ENCODE measurements at regions of chr5 and their contacts with region 1.

Region 1: DNA sequence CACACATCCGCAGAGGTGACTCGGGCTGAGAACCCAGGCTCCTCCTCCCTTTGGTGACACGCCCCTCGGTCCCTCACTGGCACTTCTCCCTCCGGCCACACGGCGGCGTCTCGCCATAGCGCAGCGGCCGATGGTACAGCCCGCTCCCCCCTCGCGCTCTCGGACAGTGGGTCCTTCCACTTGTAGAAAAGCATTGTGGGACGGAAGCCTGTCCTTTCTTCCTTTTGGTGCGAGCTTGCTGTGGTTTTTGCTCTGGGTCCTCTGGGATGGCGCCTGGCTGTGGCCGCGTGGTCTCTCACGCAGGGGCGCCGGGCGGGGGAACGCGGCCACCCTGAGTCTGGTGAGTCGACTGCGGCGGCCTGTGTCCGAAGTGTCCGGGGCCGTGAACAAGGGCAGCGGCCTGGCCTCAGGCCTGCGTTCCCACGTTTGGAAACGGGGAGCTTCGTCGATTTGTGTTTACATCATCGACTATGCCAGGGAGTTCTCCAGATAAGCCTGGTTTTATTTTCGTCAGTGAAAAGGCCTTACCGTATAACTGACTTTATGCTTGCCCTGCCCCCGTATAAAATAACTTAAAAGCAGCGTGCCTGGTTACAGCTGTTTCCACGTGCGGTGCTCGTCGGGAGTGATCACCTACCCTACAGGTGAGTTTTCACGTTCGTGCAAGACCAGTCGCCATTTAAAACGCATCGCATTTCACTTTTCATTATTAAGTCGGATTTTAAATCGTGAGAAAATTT is 258.3 kb downstream of the EPB41L4A start:
- DNase-seq: peak; percentile 95
- ATAC-seq: peak; percentile 90
- H3K4me3 Mint-ChIP-seq: peak overlapping the region; percentile 91
- H3K27ac Mint-ChIP-seq: peak overlapping the region; percentile 92
- H3K4me1 Mint-ChIP-seq: peaks cover 44% of the 10 kb centered on the region
- H3K27me3 Mint-ChIP-seq: no peaks in the 10 kb centered on the region

Region 2: DNA sequence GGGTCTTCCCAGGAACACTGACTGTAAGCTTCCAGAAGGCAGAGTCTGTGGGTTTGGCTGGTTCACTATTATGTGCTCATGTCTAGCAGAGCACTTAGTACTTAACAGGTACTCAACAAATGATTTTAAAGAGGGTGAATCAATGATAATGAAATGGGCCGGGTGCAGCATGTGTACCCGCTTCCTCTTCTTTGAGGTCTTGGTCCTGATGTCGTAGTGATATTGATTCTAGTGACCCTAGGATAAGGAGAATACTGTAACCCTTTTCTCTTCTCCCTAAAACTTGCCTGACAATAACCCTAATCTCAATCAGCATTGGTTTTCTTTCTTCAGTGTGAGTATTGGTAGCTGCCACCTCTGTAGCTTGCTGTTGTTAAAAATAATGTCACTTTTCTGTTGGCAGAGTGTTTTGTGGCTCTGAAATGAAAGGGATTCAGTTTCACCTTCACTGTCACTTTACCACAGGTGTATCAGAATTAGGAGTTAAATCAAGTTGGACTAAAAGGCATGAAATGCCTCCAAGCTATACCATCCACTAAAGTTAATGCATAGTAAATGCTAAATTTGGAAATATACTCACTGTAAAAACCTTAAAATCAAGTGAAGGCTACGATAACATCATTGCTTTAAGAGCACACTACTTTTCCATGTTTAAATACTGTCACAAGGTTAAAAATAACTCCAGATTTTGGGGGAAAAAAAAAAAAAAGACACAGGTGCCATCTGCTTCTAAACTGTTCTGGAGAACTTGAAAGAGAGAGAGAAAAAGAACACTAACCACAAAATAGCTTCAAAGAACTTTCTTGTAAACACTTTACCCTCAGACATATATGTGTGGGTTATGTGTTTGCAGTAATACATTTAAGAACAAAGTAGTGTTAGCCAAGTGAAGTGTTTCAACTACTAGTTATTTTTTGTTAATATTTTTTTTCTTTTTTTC is 930.7 kb before region 1 on chr5:
- CTCF ChIA-PET with region 1: no interaction called
- POLR2A ChIA-PET with region 1: no interaction called
- intact Hi-C with region 1: loop called (anchors 10 kb)
- DNase-seq: peak; percentile 36
- ATAC-seq: peak; percentile 49
- H3K4me3 Mint-ChIP-seq: peak overlapping the region; percentile 69
- H3K27ac Mint-ChIP-seq: peak overlapping the region; percentile 96
- H3K4me1 Mint-ChIP-seq: peaks cover 71% of the 10 kb centered on the region
- H3K27me3 Mint-ChIP-seq: no peaks in the 10 kb centered on the region

Region 3: GRCh38 chr5:111757355-111758283 is 403.2 kb before region 1 on chr5:
- CTCF ChIA-PET with region 1: interaction called, 5 read pairs
- POLR2A ChIA-PET with region 1: no interaction called
- intact Hi-C with region 1: loop called (anchors 2 to 5 kb)
- DNase-seq: peak; percentile 91
- ATAC-seq: peak; percentile 78
- H3K4me3 Mint-ChIP-seq: peak overlapping the region; percentile 80
- H3K27ac Mint-ChIP-seq: peak overlapping the region; percentile 86
- H3K4me1 Mint-ChIP-seq: peaks cover 18% of the 10 kb centered on the region
- H3K27me3 Mint-ChIP-seq: peaks cover 3% of the 10 kb centered on the region

Region 4: GRCh38 chr5:111942661-111943401 is 218.0 kb before region 1 on chr5:
- CTCF ChIA-PET with region 1: no interaction called
- POLR2A ChIA-PET with region 1: no interaction called
- intact Hi-C with region 1: no loop called
- DNase-seq: no peak
- ATAC-seq: peak; percentile 16
- H3K4me3 Mint-ChIP-seq: no peak overlapping the region
- H3K27ac Mint-ChIP-seq: no peak overlapping the region
- H3K4me1 Mint-ChIP-seq: no peaks in the 10 kb centered on the region
- H3K27me3 Mint-ChIP-seq: peaks cover 3% of the 10 kb centered on the region

Region 5: DNA sequence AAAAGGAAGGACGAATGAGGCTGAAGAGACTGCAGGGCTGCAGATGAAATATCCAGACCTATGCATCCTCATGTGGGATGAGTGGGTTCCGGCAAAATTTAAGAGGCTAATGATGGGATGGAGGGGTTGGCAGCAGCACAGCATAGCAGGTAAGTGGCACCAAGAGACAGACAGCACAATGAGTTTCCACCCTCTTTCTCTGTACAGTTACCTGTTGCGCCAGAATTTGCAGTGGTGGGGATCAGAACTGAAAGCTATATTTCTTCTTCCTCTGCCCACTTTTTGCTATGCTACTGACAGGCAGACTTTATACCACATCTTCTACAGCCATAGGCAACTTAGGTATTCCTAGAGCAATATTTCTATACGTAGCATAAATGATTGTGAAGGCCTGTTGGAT is 31.2 kb after region 1 on chr5:
- CTCF ChIA-PET with region 1: no interaction called
- POLR2A ChIA-PET with region 1: no interaction called
- intact Hi-C with region 1: no loop called
- DNase-seq: no peak
- ATAC-seq: no peak
- H3K4me3 Mint-ChIP-seq: no peak overlapping the region
- H3K27ac Mint-ChIP-seq: no peak overlapping the region
- H3K4me1 Mint-ChIP-seq: peaks cover 7% of the 10 kb centered on the region
- H3K27me3 Mint-ChIP-seq: peaks cover 28% of the 10 kb centered on the region

Region 6: DNA sequence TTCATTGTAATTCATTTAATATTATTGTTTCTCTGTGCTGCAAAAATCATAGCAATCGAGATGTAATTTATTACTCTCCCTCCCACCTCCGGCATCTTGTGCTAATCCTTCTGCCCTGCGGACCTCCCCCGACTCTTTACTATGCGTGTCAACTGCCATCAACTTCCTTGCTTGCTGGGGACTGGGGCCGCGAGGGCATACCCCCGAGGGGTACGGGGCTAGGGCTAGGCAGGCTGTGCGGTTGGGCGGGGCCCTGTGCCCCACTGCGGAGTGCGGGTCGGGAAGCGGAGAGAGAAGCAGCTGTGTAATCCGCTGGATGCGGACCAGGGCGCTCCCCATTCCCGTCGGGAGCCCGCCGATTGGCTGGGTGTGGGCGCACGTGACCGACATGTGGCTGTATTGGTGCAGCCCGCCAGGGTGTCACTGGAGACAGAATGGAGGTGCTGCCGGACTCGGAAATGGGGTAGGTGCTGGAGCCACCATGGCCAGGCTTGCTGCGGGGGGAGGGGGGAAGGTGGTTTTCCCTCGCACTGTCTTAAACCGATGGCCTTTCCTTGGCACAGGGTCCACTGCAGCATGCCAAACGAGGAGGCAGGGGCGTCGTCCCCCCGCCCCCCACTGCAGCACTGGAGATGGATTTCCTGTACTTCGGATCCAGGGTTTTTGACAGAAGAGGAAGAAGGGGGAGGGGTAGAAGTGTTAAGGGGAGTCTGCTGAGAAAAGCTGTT is 576.8 kb after region 1 on chr5 and contains the start of gene APC:
- CTCF ChIA-PET with region 1: no interaction called
- POLR2A ChIA-PET with region 1: no interaction called
- intact Hi-C with region 1: loop called in 1 of 2 experiments (anchors 10 kb)
- DNase-seq: peak; percentile 92
- ATAC-seq: peak; percentile 99
- H3K4me3 Mint-ChIP-seq: peak within 1 kb of the TSS; percentile 93
- H3K27ac Mint-ChIP-seq: peak within 1 kb of the TSS; percentile 83
- H3K4me1 Mint-ChIP-seq: peaks cover 16% of the 10 kb centered on the region
- H3K27me3 Mint-ChIP-seq: no peaks in the 10 kb centered on the region
- total RNA-seq, gene APC: 20.1 to 22.3 TPM

Region 7: GRCh38 chr5:112965733-112966700 is 805.2 kb after region 1 on chr5:
- CTCF ChIA-PET with region 1: no interaction called
- POLR2A ChIA-PET with region 1: no interaction called
- intact Hi-C with region 1: no loop called
- DNase-seq: peak; percentile 45
- ATAC-seq: peak; percentile 41
- H3K4me3 Mint-ChIP-seq: no peak overlapping the region
- H3K27ac Mint-ChIP-seq: peak overlapping the region; percentile 87
- H3K4me1 Mint-ChIP-seq: peaks cover 43% of the 10 kb centered on the region
- H3K27me3 Mint-ChIP-seq: no peaks in the 10 kb centered on the region

Region 8: DNA sequence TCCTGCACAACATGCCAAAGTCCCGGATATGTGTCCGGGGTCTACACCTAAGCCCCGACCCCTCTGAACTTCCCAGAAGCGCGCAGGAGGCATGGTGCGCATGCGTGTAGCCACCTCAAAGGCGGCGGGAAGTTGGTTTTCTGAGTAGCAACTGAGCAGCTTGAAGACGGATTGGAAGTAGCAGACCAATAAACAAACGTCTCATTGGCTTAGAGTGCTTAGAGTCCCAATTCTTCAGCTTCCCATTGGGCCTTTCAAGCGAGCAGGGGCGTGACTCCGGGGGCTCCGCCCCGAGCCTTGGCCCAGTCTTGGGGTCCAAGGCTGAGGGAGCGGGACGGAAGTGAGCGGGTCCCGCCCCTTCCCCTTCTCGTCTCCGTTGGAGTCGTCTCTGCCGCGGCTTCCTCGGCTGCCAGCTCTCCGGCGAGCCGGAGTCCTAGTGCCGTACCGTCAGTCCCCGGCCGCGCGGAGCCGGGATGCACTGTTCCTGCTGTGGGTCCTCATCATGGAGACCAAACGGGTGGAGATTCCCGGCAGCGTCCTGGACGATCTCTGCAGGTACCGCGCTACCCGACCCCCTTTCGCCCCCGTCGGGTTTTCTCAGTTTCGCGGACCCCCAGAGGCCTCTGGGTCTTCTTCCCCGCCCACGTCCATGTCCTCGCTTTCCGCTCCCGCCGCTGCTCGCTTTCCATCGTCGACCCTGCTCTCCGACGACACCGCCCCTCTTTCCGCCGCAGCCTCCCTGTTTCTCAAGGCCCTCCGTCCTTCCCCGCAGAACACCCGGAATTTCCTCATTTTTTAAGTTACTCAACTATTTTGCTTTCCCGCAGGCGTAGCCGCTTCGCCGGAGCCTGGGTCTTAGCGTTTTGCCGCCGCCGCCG is 815.8 kb after region 1 on chr5 and contains the start of gene DCP2:
- CTCF ChIA-PET with region 1: no interaction called
- POLR2A ChIA-PET with region 1: no interaction called
- intact Hi-C with region 1: loop called in 1 of 2 experiments (anchors 5 kb)
- DNase-seq: peak; percentile 96
- ATAC-seq: peak; percentile 94
- H3K4me3 Mint-ChIP-seq: peak within 1 kb of the TSS; percentile 99
- H3K27ac Mint-ChIP-seq: peak within 1 kb of the TSS; percentile 98
- H3K4me1 Mint-ChIP-seq: peaks cover 39% of the 10 kb centered on the region
- H3K27me3 Mint-ChIP-seq: no peaks in the 10 kb centered on the region
- total RNA-seq, gene DCP2: 94.0 to 101 TPM